Body of pancreas (tissue), 4 donors: ENCODE measurements at regions of chr12 and their contacts with region 1.

Region 1: GRCh38 chr12:6779708-6780432 is 7.5 kb downstream of the LAG3 start:
- DNase-seq: no peak
- ATAC-seq: no peak
- H3K4me3 ChIP-seq: no peak overlapping the region
- H3K27ac ChIP-seq: no peak overlapping the region
- H3K4me1 ChIP-seq: peaks cover 8% of the 10 kb centered on the region
- H3K27me3 ChIP-seq: no peaks in the 10 kb centered on the region
- CTCF ChIP-seq: no peak
- POLR2A ChIP-seq: no peak

Region 2: DNA sequence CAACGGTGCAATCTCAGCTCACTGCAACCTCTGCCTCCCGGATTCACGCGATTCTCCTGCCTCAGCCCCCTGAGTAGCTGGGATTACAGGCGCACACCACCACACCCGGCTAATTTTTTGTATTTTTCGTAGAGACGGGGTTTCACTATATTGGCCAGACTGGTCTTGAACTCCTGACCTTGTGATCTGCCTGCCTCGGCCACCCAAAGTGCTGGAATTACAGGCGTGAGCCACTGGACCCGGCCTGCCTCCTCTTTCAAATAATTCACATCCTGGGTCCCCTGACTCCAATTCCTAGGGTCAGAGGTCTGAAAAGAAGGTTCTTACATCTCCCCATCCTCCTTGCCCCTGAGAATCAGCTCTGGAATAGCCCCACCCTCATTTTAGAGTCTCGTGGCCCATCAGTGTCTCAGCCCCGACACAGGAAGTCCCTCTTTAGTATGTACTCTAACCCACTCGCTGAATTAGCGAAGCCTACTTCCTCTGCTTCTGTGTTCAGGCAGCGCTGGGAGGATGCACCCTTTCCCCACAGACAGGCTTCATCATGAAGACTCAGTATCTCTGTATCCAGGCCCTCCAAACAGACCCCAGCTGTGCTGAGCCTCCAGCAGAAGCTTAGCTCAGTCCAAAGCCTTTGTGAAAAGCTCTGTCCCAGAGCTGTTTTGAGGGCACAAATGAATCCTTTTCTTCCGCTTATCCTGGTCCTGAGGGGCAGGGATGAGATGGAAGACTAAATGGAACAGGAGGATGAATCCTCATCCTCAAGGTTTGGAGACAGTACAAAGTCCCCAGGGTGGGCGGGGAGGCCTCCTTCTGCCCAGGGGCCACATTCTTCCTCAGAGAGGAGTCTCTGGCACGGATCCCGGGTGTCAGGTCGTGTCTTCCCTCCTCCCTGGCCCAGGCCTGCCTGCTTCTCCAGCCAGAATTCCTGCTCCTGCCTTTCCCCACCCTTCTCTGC is 147.6 kb before region 1 on chr12:
- intact Hi-C with region 1: no loop called
- DNase-seq: peak in 1 of 4 donors; percentile 43
- ATAC-seq: peak; percentile 16
- H3K4me3 ChIP-seq: no peak overlapping the region
- H3K27ac ChIP-seq: no peak overlapping the region
- H3K4me1 ChIP-seq: no peaks in the 10 kb centered on the region
- H3K27me3 ChIP-seq: no peaks in the 10 kb centered on the region
- CTCF ChIP-seq: no peak
- POLR2A ChIP-seq: peak in 1 of 3 donors; percentile 16

Region 3: DNA sequence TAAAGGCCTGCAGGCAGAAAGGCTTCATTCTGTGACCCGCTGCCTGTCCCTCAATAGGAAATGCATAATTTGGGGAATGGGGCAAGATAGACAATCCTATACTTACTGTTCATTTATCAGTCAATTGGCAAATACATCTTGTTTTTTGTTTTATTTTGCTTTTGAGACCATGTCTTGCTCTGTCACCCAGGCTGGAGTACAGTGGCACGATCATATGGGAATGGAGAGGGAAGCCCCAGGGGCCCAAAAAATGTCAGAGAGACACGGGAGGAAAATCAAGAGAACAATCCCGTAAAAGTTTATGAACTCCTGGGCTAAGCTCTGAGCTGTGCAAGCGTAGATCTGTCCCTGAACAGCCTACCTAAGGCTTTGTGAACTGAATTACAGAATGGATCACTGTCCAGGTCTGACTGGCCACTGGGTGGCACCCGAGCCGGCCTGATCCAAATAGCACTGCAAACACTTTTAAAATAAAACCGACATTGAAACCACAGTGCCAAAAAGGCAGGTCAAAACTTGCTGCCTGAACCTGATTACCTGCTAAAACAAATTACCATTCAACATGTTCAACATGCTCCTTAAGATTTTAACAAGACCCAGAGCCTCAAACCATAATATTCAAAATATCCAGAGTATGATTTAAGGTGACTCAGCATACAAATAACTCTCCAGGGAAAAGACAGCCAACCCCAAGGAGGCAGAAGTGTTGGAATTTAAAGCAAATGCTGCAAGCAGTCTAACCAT is 44.2 kb before region 1 on chr12:
- intact Hi-C with region 1: loop called (anchors 5 kb)
- DNase-seq: peak; percentile 69 to 81 (median 72)
- ATAC-seq: peak; percentile 91
- H3K4me3 ChIP-seq: no peak overlapping the region
- H3K27ac ChIP-seq: no peak overlapping the region
- H3K4me1 ChIP-seq: peaks cover 4% of the 10 kb centered on the region
- H3K27me3 ChIP-seq: no peaks in the 10 kb centered on the region
- CTCF ChIP-seq: peak; percentile 60 to 86 (median 72)
- POLR2A ChIP-seq: no peak

Region 4: GRCh38 chr12:6825398-6826124 is 45.7 kb after region 1 on chr12:
- intact Hi-C with region 1: no loop called
- DNase-seq: peak; percentile 81 to 86 (median 84)
- ATAC-seq: peak; percentile 63
- H3K4me3 ChIP-seq: no peak overlapping the region
- H3K27ac ChIP-seq: no peak overlapping the region
- H3K4me1 ChIP-seq: peaks cover 41% of the 10 kb centered on the region
- H3K27me3 ChIP-seq: peaks cover 0 to 22% of the 10 kb centered on the region in 2 donors
- CTCF ChIP-seq: peak; percentile 78 to 91 (median 87)
- POLR2A ChIP-seq: peak in 1 of 3 donors; percentile 16